GM10248 (cell line): ENCODE measurements at regions of chr13 and their contacts with region 1.

Region 1: GRCh38 chr13:20686863-20687579 is 16.5 kb upstream of the IL17D start:
- DNase-seq: no peak
- CTCF ChIP-seq: no peak

Region 2: DNA sequence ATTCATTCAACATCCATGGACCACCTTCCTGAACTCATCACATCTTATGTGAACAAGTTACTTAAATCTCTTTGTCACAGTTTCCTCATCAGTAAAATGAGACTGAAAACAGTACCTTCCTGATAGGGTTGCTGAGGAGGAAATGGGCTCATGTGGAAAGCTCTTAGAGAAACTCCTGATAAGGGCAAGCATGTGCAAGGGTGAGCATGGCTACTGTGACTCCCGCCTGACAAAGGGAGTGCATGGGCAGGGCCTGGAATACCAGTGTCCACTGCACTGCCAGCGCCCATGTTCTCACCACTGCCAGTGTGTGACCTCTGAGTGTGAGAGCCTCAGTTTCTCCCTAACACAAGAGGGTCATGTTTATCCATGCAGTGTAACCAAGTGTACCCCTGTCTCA is 10.8 kb before region 1 on chr13:
- CTCF ChIA-PET with region 1: interaction called, 14 read pairs
- POLR2A ChIA-PET with region 1: no interaction called
- DNase-seq: no peak
- CTCF ChIP-seq: no peak